Activated CD8-positive, alpha-beta T cell treated with anti-CD3 and anti-CD28 coated beads for 36 hours (primary cell): ENCODE measurements at regions of chr13 and their contacts with region 1.

Region 1: DNA sequence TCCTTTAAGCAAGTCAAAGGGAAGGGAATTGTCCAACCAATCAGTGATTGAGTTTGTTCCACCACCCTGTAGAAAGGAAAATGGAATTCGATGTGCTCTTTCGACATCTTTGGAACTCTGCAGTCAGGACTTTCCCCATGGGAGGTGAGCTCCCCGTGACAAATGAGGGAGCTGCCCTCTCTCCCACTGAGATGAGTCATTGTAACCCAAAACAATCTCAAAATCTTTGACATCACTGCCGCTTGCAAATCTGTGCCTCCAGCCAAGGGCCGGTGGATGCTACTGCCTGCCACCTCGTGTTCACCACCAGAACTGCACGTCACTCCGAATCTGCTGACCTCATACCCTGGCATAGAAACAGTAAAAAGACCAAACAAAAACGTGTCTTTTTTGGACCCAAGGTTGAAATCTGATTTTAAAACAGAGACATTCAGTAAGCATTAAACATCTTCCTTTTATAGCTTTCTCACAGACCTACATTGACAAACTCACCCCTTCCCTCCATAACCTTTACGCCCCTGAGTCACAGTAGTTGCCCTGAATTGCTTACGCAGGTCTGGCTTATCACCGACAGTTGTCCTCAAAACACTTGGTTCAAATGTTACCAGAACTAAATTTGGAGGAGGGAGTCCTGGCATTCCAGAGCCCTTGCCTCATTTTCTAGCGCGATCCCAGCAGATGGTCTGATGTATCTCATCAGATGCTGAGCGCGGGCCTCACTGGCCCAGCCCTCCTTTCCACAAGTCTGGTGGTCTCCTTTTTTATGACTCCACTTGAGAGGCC is 105.2 kb downstream of the COL4A2 start:
- DNase-seq: peak; percentile 82
- ATAC-seq: peak; percentile 95
- H3K4me3 Mint-ChIP-seq: no peak overlapping the region
- H3K27ac Mint-ChIP-seq: no peak overlapping the region
- H3K4me1 Mint-ChIP-seq: peaks cover 2% of the 10 kb centered on the region
- H3K27me3 Mint-ChIP-seq: peaks cover 65% of the 10 kb centered on the region
- CTCF ChIP-seq: peak; percentile 87

Region 2: DNA sequence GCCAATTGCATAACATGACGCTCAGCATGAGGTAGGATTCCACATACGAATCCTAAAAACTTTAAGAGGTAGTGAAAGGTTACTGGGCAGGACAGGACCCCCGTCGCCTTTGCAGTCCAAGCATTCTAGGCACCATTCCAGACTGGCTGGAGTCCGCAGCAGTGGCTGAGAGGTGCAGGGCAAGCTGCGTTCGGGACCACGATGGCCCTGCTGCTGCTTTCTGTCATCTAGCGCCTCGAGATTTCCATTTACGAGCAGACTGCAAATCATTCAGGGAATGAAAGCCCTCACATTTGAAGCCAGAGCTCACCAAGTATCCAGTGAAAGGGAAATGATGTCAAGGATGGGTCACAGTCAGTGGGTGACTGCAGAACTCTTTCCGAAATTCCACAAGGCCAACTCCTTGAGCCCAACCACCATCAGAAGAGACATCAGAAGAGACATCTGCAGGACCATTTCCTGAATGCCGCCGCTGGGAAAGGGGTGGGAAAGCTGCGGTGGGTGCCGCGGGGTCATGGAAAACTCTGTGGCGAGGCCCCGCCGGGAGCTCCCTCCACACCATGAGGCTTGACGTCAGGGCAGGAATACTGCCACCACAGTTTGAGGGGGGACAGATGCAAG is 193.6 kb before region 1 on chr13:
- CTCF ChIA-PET with region 1: interaction called, 40 read pairs
- POLR2A ChIA-PET with region 1: no interaction called
- intact Hi-C with region 1: loop called (anchors 2 kb)
- DNase-seq: no peak
- ATAC-seq: no peak
- H3K4me3 Mint-ChIP-seq: no peak overlapping the region
- H3K27ac Mint-ChIP-seq: no peak overlapping the region
- H3K4me1 Mint-ChIP-seq: no peaks in the 10 kb centered on the region
- H3K27me3 Mint-ChIP-seq: peaks cover 10% of the 10 kb centered on the region
- CTCF ChIP-seq: no peak

Region 3: GRCh38 chr13:110225609-110226562 is 186.4 kb before region 1 on chr13:
- CTCF ChIA-PET with region 1: interaction called, 40 read pairs
- POLR2A ChIA-PET with region 1: no interaction called
- intact Hi-C with region 1: loop called (anchors 2 kb)
- DNase-seq: no peak
- ATAC-seq: no peak
- H3K4me3 Mint-ChIP-seq: no peak overlapping the region
- H3K27ac Mint-ChIP-seq: no peak overlapping the region
- H3K4me1 Mint-ChIP-seq: no peaks in the 10 kb centered on the region
- H3K27me3 Mint-ChIP-seq: peaks cover 13% of the 10 kb centered on the region
- CTCF ChIP-seq: no peak

Region 4: GRCh38 chr13:110319774-110320509 is 92.4 kb before region 1 on chr13:
- CTCF ChIA-PET with region 1: no interaction called
- POLR2A ChIA-PET with region 1: no interaction called
- intact Hi-C with region 1: no loop called
- DNase-seq: peak; percentile 48
- ATAC-seq: no peak
- H3K4me3 Mint-ChIP-seq: no peak overlapping the region
- H3K27ac Mint-ChIP-seq: no peak overlapping the region
- H3K4me1 Mint-ChIP-seq: peaks cover 4% of the 10 kb centered on the region
- H3K27me3 Mint-ChIP-seq: peaks cover 28% of the 10 kb centered on the region
- CTCF ChIP-seq: no peak

Region 5: DNA sequence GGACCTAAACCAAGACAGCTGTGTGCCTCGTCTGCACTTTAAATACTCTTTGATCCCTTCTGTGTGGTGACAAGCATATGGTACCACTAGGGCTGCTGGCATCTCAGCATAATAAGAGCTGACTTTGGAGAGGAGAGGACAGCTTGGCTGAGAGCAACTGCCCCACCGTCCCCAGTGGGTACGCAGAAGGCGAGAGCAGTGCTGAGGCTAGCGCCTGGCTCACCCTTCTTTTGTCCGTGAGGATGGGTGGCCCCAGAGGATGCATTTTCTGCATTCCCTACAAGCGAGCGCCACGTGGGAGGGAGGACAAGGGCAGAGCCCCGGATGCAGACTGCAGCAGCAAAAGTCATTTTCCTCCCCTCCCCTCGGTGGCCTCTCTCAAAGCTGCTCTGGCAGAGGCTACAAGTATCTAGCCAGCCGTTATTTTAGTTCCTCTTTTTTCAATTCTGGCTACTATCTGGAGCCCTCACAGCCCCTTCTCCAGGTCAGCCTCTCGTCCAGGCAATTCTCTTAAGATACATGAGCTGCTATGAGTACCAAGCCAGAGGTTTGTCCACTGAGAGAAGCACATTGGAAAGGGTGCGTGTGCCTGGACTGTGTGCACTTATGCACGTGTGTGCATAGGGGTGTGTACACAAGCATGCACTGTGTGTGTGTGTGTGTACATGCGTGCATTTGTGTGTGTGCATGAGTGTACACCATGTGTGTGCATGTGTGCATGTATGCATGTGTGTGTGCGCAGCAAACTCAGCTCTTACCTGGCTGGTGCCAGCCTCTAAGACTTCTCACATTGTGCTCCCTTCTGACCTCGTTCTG is 97.9 kb after region 1 on chr13:
- CTCF ChIA-PET with region 1: no interaction called
- POLR2A ChIA-PET with region 1: no interaction called
- intact Hi-C with region 1: no loop called
- DNase-seq: no peak
- ATAC-seq: no peak
- H3K4me3 Mint-ChIP-seq: no peak overlapping the region
- H3K27ac Mint-ChIP-seq: no peak overlapping the region
- H3K4me1 Mint-ChIP-seq: peaks cover 2% of the 10 kb centered on the region
- H3K27me3 Mint-ChIP-seq: no peaks in the 10 kb centered on the region
- CTCF ChIP-seq: no peak